OCI-LY7 (cell line): ENCODE measurements at regions of chr10 and their contacts with region 1.

Region 1: DNA sequence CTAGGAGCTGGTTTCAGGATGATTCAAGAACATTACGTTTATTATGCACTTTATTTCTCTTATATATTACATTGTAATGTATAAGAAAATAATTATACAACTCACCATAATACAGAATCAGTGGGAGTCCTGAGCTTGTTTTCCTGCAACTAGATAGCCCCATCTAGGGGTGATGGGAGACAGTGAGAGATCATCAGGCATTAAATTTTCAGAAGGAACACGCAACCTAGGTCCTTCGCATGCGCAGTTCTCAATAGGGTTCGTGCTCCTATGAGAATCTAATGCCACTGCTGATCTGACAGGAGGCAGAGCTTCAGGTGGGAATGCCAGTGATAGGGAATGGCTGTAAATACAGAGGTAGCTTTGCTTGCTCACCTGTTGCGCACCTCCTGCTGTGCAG is 137.9 kb downstream of the ANKRD30A start:
- DNase-seq: no peak
- H3K4me3 ChIP-seq: no peak overlapping the region
- H3K27ac ChIP-seq: no peak overlapping the region
- H3K4me1 ChIP-seq: no peaks in the 10 kb centered on the region
- CTCF ChIP-seq: peak; percentile 34

Region 2: DNA sequence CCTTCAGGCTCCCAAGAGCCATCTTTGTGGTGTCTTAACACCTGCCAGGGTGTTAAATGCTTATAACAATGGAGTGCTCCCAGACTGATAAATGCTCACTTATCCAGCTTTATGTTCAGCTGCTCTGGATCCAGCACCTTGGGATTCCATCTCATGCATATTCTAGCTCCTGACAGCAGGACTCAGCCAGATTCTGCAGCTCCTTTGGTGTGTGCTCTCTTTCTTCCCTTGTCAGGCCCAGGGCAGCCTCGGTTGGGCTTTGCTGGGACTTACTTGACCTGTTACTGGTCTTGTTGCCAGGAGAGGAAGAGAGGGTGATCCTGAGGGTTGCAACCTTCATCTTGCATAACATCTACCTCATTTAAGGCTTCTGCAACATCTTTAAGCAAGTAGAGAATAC is 1986.5 kb before region 1 on chr10:
- CTCF ChIA-PET with region 1: no interaction called
- POLR2A ChIA-PET with region 1: interaction called, 11 read pairs
- intact Hi-C with region 1: no loop called
- DNase-seq: no peak
- H3K4me3 ChIP-seq: no peak overlapping the region
- H3K27ac ChIP-seq: no peak overlapping the region
- H3K4me1 ChIP-seq: no peaks in the 10 kb centered on the region
- CTCF ChIP-seq: no peak